ENCODE measurements at regions of chr16 and their contacts with region 1.

Region 1: GRCh38 chr16:57576429-57576870 is 34.0 kb downstream of the ADGRG5 start:
- DNase-seq: peak; percentile 69 to 89 (median 80)
- ATAC-seq: peak; percentile 94
- H3K4me3 ChIP-seq: no peak overlapping the region
- H3K4me3 Mint-ChIP-seq: no peak overlapping the region
- H3K27ac ChIP-seq: no peak overlapping the region
- H3K27ac Mint-ChIP-seq: no peak overlapping the region
- H3K4me1 ChIP-seq: peaks cover 35% of the 10 kb centered on the region
- H3K4me1 Mint-ChIP-seq: peaks cover 29% of the 10 kb centered on the region
- H3K27me3 ChIP-seq: no peaks in the 10 kb centered on the region
- H3K27me3 Mint-ChIP-seq: peaks cover 7% of the 10 kb centered on the region
- CTCF ChIP-seq: peak; percentile 98

Region 2: GRCh38 chr16:56742030-56742984 is 834.1 kb before region 1 on chr16:
- CTCF ChIA-PET with region 1: no interaction called
- POLR2A ChIA-PET with region 1: no interaction called
- intact Hi-C with region 1: no loop called
- DNase-seq: no peak
- ATAC-seq: no peak
- H3K4me3 ChIP-seq: no peak overlapping the region
- H3K4me3 Mint-ChIP-seq: no peak overlapping the region
- H3K27ac ChIP-seq: no peak overlapping the region
- H3K27ac Mint-ChIP-seq: no peak overlapping the region
- H3K4me1 ChIP-seq: no peaks in the 10 kb centered on the region
- H3K4me1 Mint-ChIP-seq: peaks cover 30% of the 10 kb centered on the region
- H3K27me3 ChIP-seq: no peaks in the 10 kb centered on the region
- H3K27me3 Mint-ChIP-seq: no peaks in the 10 kb centered on the region
- CTCF ChIP-seq: no peak

Region 3: DNA sequence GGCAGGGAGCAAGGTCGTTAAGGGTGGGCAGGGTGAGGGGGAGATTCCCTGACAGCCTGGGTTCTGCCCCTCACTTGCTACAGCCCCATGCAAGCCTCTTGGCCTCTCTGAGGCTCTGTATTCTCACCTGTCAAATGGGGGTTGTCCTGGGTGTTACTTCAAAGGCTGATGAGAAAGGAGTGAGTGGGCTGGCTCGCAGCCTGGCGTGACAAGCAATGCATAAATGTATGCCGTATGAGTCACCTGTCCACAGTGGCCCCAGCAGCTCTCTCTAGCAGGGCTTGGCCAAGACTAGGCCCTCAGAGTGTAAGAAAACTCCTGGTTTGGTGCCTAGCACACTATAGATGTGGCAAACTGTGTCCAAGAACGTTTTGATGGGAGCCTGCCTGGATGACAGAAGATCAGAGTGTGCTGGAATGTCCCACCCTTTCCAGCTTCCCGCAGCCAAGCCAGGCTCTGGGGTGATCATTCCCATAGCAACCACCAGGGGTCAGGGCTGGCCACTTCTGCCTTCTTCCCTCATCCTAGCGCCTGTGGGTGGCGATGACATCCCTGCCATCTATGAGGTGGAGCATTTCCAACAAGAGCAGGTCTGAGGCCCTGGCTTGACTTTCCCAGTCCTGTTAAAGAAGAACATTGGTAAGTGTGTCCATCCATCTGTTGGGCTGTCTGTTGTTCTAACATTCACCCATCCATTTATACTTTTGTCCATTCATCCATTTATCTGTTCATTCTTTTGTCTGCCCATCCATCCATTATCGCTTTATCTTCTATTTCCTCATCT is 14.8 kb after region 1 on chr16:
- CTCF ChIA-PET with region 1: interaction called, 9 read pairs
- POLR2A ChIA-PET with region 1: interaction called, 7 read pairs
- intact Hi-C with region 1: loop called in 1 of 2 experiments (anchors 2 kb)
- DNase-seq: peak; percentile 40 to 81 (median 52)
- ATAC-seq: peak; percentile 45
- H3K4me3 ChIP-seq: no peak overlapping the region
- H3K4me3 Mint-ChIP-seq: peak overlapping the region; percentile 57
- H3K27ac ChIP-seq: no peak overlapping the region
- H3K27ac Mint-ChIP-seq: peak overlapping the region; percentile 70
- H3K4me1 ChIP-seq: peaks cover 32% of the 10 kb centered on the region
- H3K4me1 Mint-ChIP-seq: peaks cover 42% of the 10 kb centered on the region
- H3K27me3 ChIP-seq: no peaks in the 10 kb centered on the region
- H3K27me3 Mint-ChIP-seq: no peaks in the 10 kb centered on the region
- CTCF ChIP-seq: peak; percentile 83

Region 4: GRCh38 chr16:57718011-57718410 is 141.6 kb after region 1 on chr16:
- CTCF ChIA-PET with region 1: no interaction called
- POLR2A ChIA-PET with region 1: no interaction called
- intact Hi-C with region 1: loop called in 1 of 2 experiments (anchors 5 kb)
- DNase-seq: no peak
- ATAC-seq: no peak
- H3K4me3 ChIP-seq: no peak overlapping the region
- H3K4me3 Mint-ChIP-seq: no peak overlapping the region
- H3K27ac ChIP-seq: no peak overlapping the region
- H3K27ac Mint-ChIP-seq: no peak overlapping the region
- H3K4me1 ChIP-seq: no peaks in the 10 kb centered on the region
- H3K4me1 Mint-ChIP-seq: no peaks in the 10 kb centered on the region
- H3K27me3 ChIP-seq: peaks cover 0 to 3% of the 10 kb centered on the region in 2 experiments
- H3K27me3 Mint-ChIP-seq: no peaks in the 10 kb centered on the region
- CTCF ChIP-seq: no peak

Region 5: DNA sequence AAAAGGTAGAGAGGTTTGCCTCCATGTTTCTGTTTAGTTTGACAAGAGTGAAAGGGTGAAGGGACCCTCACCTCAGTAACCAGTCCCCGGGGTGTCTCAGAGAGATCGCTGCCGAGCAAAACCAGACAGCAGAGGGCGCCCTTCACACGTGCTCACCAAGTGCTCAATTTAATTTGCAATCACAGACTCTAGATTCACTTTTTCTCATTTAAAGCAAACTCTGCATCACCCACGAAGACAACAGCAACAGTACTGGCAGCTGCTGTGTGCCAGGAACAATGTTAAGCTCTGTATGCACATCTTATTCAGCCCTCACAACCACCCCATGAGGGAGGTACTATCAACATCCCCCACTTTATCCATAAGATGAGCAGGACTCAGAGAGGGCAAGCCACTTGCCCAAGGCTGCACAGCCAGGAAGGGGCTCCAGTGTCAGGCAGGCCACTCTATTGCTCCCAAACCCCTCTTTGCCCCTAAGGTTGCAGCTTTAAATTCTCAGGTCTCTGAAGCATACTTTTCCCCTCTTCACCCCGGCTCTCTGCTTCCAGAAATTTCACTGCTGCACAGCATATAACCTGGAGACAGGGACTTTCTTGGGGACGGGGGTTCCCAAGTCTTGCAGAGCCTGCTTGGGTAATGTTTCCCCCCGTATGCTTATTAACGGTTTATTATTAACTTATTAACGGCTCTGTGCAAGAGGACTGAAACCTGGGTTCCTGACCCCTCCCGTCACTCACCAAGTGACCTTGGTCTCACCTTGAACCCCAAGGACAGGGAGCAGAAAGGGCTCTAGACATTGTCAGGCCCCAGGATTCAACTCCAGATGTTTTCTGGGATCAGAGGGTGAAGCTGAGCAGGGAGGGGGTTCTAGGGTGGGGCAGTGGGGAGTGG is 323.6 kb after region 1 on chr16:
- CTCF ChIA-PET with region 1: no interaction called
- POLR2A ChIA-PET with region 1: no interaction called
- intact Hi-C with region 1: loop called in 1 of 2 experiments (anchors 1 kb)
- DNase-seq: peak; percentile 62 to 90 (median 78)
- ATAC-seq: peak; percentile 67
- H3K4me3 ChIP-seq: no peak overlapping the region
- H3K4me3 Mint-ChIP-seq: no peak overlapping the region
- H3K27ac ChIP-seq: no peak overlapping the region
- H3K27ac Mint-ChIP-seq: no peak overlapping the region
- H3K4me1 ChIP-seq: peaks cover 4% of the 10 kb centered on the region
- H3K4me1 Mint-ChIP-seq: peaks cover 6% of the 10 kb centered on the region
- H3K27me3 ChIP-seq: peaks cover 0 to 6% of the 10 kb centered on the region in 2 experiments
- H3K27me3 Mint-ChIP-seq: peaks cover 24% of the 10 kb centered on the region
- CTCF ChIP-seq: peak; percentile 83

Region 6: DNA sequence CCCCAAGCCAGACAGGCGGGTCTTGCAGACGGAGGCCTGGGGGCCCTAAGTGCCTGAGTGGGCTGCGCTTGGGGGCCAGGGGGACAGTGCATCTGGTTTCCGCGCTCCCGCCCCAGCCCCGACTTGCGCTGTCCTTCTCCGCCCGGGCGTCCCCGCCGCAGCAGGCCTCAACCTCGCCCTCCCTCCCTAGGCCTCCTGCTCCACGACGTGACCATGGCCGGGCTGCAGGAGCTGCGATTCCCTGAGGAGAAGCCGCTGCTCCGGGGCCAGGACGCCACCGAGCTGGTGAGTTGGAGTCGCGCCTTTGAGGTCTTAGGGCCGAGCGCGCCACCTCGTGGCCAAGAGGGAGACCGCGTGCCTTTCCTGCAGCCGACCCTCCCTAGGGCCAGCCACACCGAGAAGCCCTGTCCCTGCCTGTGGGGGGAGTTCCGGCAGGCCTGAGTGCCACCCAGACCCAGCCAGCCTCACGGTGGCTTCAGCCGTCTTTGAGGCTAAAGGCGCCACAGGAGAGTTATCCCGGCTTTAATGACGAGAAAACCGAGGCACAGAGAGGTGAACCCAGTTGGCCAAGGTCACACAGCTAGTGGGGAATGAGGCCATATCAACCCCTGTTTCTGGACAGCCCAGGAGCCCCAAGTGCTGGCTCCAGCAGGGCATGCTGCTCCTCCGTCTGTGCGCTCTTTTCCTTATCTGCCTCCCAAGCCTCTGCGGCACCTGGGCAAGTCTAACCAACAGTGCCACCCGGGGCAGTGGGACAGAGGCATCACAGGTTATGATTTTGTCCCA is 911.3 kb after region 1 on chr16:
- CTCF ChIA-PET with region 1: no interaction called
- POLR2A ChIA-PET with region 1: no interaction called
- intact Hi-C with region 1: loop called in 1 of 2 experiments (anchors 5 kb)
- DNase-seq: peak; percentile 53 to 86 (median 63)
- ATAC-seq: peak; percentile 84
- H3K4me3 ChIP-seq: no peak overlapping the region
- H3K4me3 Mint-ChIP-seq: no peak overlapping the region
- H3K27ac ChIP-seq: no peak overlapping the region
- H3K27ac Mint-ChIP-seq: no peak overlapping the region
- H3K4me1 ChIP-seq: peaks cover 7% of the 10 kb centered on the region
- H3K4me1 Mint-ChIP-seq: no peaks in the 10 kb centered on the region
- H3K27me3 ChIP-seq: peaks cover 0 to 2% of the 10 kb centered on the region in 2 experiments
- H3K27me3 Mint-ChIP-seq: peaks cover 13% of the 10 kb centered on the region
- CTCF ChIP-seq: peak; percentile 93

Measured in CD4-positive, alpha-beta T cell (primary cell).